ENCODE measurements at regions of chr4 and their contacts with region 1.

Region 1: GRCh38 chr4:142405021-142405694 is 440.9 kb downstream of the INPP4B start:
- DNase-seq: peak; percentile 74
- ATAC-seq: peak; percentile 59
- H3K4me3 Mint-ChIP-seq: peak overlapping the region; percentile 88
- H3K27ac Mint-ChIP-seq: peak overlapping the region; percentile 98
- H3K4me1 Mint-ChIP-seq: peaks cover 66% of the 10 kb centered on the region
- H3K27me3 Mint-ChIP-seq: no peaks in the 10 kb centered on the region
- CTCF ChIP-seq: no peak

Region 2: GRCh38 chr4:142293536-142293935 is 111.6 kb before region 1 on chr4:
- CTCF ChIA-PET with region 1: no interaction called
- POLR2A ChIA-PET with region 1: interaction called, 3 read pairs
- intact Hi-C with region 1: loop called (anchors 10 kb)
- DNase-seq: no peak
- ATAC-seq: no peak
- H3K4me3 Mint-ChIP-seq: no peak overlapping the region
- H3K27ac Mint-ChIP-seq: no peak overlapping the region
- H3K4me1 Mint-ChIP-seq: peaks cover 43% of the 10 kb centered on the region
- H3K27me3 Mint-ChIP-seq: no peaks in the 10 kb centered on the region
- CTCF ChIP-seq: no peak

Region 3: GRCh38 chr4:142379277-142380057 is 25.7 kb before region 1 on chr4:
- CTCF ChIA-PET with region 1: interaction called, 11 read pairs
- POLR2A ChIA-PET with region 1: interaction called, 23 read pairs
- intact Hi-C with region 1: loop called (anchors 2 kb)
- DNase-seq: no peak
- ATAC-seq: no peak
- H3K4me3 Mint-ChIP-seq: no peak overlapping the region
- H3K27ac Mint-ChIP-seq: peak overlapping the region; percentile 94
- H3K4me1 Mint-ChIP-seq: peaks cover 73% of the 10 kb centered on the region
- H3K27me3 Mint-ChIP-seq: no peaks in the 10 kb centered on the region
- CTCF ChIP-seq: no peak

Region 4: DNA sequence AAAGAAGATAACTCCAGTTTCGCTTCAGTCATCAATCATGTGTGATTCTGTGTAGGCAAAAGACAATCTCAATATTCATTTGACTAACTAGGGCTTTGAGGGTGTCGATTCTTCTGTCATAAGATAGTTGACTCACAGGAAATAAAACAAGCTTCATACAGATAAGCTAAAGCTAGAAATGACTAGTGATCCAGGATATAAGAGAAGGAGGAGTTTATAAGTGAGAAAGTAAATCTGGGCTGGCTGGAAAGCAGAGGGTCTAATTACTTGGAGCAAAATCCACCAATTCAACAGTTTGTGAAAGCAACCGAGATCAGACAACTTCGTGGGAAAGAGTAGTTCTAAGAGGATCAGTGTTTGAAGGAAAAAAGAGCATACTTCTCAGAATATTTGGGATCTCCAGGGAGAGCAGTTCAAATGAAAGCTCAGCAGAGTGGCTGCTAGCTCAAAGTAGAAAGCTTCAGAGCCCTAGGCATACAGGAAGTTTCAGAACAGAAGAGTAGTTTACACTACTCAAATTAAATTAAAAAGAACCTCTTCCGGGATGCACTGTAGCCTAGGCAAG is 11.6 kb after region 1 on chr4:
- CTCF ChIA-PET with region 1: interaction called, 51 read pairs
- POLR2A ChIA-PET with region 1: interaction called, 52 read pairs
- intact Hi-C with region 1: loop called (anchors 1 kb)
- DNase-seq: peak; percentile 29
- ATAC-seq: peak; percentile 90
- H3K4me3 Mint-ChIP-seq: peak overlapping the region; percentile 69
- H3K27ac Mint-ChIP-seq: peak overlapping the region; percentile 98
- H3K4me1 Mint-ChIP-seq: peaks cover 58% of the 10 kb centered on the region
- H3K27me3 Mint-ChIP-seq: no peaks in the 10 kb centered on the region
- CTCF ChIP-seq: no peak

Region 5: DNA sequence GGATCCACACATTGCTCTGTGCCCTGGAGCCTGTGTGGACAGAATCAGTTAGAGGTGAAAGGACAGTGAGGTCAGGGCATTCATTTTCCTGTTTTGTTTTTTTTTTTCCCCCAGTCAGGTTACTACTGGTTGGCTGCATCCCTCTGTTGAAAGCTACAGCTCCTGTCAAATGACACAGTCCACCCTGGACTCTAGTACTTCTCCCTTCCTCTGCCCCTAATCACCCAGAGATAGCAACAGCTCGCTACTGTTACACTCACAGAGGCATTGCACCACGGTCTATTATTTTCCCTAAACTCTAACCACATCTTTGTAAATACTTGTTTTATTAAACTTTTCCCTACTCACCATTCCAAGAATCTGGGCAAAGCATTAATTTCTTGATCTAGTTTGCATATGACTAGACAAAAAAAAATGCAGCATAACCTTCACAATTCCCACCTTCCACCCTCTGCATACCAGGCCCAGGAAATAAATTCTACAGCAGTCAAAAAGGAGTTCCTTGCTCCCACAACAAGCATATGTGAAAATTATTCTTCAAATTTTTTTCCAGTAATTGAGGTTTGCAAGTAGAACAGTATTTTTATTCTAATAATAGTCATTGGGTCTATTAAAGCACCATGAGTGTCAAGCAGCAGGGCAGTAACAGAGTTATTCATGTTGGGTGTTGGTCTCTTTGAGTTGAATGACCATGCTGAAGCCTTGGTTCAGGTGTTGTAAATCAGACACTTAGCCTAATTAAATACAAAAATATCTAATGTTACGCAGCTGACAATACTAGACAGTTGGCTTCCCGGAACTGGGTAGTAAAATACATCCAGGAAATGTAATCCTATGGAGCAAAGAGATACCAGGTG is 111.7 kb after region 1 on chr4:
- CTCF ChIA-PET with region 1: no interaction called
- POLR2A ChIA-PET with region 1: no interaction called
- intact Hi-C with region 1: no loop called
- DNase-seq: no peak
- ATAC-seq: no peak
- H3K4me3 Mint-ChIP-seq: no peak overlapping the region
- H3K27ac Mint-ChIP-seq: no peak overlapping the region
- H3K4me1 Mint-ChIP-seq: no peaks in the 10 kb centered on the region
- H3K27me3 Mint-ChIP-seq: no peaks in the 10 kb centered on the region
- CTCF ChIP-seq: no peak

Region 6: GRCh38 chr4:142567199-142567598 is 162.0 kb after region 1 on chr4:
- CTCF ChIA-PET with region 1: interaction called, 8 read pairs
- POLR2A ChIA-PET with region 1: interaction called, 13 read pairs
- intact Hi-C with region 1: loop called (anchors 5 kb)
- DNase-seq: peak; percentile 38
- ATAC-seq: peak; percentile 79
- H3K4me3 Mint-ChIP-seq: peak overlapping the region; percentile 65
- H3K27ac Mint-ChIP-seq: peak overlapping the region; percentile 76
- H3K4me1 Mint-ChIP-seq: peaks cover 30% of the 10 kb centered on the region
- H3K27me3 Mint-ChIP-seq: no peaks in the 10 kb centered on the region
- CTCF ChIP-seq: peak; percentile 14